HEK293T (cell line): ENCODE measurements at regions of chr10 and their contacts with region 1.

Region 1: GRCh38 chr10:104139221-104139620 is 17.2 kb downstream of the SFR1 start:
- DNase-seq: no peak

Region 2: GRCh38 chr10:104109908-104110662 is 29.1 kb before region 1 on chr10:
- CTCF ChIA-PET with region 1: no interaction called
- POLR2A ChIA-PET with region 1: no interaction called
- DNase-seq: no peak

Region 3: DNA sequence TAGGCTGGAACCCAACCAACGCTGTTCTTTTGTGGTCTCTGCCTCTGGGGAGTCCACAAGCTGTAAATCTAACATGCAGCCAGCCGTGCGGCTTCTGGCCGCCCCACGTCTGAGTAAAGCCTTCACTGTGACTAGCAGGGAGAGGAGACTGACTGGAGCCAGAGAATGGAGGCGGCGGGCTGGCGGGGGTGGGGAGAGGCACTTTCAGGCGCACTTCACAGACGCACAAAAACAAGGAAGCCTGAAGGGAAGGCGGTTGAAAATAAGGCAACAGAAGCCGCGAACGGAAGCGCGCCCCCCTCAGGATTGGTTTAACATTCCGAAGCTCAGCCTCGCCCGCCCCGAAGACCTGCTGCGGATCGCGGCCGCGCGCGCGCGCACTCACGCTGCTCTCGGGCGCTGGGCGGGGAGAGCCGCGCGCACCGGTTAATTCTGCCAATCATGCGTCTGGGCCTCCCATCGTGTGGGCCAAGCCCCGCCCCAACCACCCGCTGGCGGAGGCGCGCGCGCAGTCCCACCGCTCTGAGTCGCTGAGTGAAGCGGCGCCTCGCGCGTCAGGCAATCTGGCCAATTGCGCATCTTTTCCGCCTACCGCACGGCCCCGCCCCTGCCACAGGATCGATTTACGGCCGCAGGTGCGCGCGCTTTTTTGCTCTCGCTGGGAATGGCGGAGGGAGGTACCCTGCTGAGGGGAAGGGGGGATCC is 17.5 kb before region 1 on chr10 and contains the start of gene SFR1:
- CTCF ChIA-PET with region 1: interaction called, 5 read pairs
- POLR2A ChIA-PET with region 1: interaction called, 10 read pairs
- DNase-seq: peak; percentile 97

Region 4: DNA sequence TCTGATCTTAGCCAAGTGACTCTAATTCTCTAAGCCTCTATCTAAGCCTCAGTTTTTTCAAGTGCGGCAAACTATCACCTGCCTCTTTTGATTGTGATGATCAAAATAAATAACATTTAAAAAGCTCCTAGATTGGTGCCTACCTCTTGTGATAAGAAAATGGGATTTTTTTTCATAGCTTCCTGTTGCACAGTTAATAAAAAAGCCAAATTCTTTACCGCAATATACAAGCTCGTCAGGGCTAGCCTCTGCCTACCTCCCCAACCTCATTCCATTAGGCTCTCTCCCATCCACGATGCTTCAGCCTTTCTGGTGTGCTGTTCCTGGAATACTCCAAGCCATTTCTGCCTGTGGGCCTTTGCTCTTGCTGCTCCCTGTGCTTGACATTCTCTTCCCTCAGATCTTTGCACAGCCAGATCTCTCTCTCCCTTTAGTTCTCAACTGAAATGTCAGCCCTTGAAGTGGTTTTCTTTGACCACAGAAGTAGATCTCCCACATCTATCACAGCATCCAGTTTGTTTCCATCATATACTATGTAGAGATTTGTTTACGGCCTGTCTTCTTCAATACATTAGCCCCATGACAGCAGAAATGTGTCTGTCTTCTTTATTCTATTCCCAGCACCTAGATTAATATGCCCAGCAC is 31.5 kb after region 1 on chr10:
- CTCF ChIA-PET with region 1: no interaction called
- POLR2A ChIA-PET with region 1: no interaction called
- DNase-seq: no peak